Activated CD4-positive, alpha-beta T cell treated with anti-CD3 and anti-CD28 coated beads, Interleukin-2, amount 10 ng/mL, durations not matched to agents 24 days and 14 days (primary cell): ENCODE measurements at regions of chr6 and their contacts with region 1.

Region 1: GRCh38 chr6:111973118-111973761 is 80.7 kb upstream of the CCN6 start:
- DNase-seq: peak; percentile 86
- H3K4me3 Mint-ChIP-seq: peak overlapping the region; percentile 73
- H3K27ac Mint-ChIP-seq: peak overlapping the region; percentile 86
- H3K4me1 Mint-ChIP-seq: peaks cover 51% of the 10 kb centered on the region
- H3K27me3 Mint-ChIP-seq: peaks cover 7% of the 10 kb centered on the region

Region 2: DNA sequence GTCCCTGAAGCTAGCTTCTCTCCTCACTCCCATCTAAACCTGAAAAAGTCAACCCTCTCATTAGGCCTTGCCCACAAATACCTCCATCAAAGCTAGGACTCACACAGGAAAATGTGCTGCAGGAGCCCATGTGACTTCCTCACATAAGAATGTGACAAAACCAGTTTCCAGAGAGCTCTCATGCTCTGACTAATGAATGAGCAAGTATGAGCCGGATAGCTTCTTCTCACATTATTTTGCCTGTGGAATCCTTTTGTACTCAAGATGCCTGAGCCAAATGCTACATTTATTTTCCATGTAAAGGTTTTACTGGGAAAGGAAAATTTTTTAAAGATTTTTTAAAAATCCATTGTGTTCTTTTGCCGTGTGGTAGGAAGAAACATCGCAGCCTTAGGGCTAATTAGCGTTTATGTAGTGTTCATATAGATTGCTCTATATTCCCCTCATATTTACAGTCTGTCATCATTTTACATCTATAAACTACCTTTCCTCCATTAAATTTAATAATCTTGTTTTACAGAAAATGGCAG is 12.0 kb after region 1 on chr6:
- intact Hi-C with region 1: loop called (anchors 1 kb)
- DNase-seq: peak; percentile 73
- H3K4me3 Mint-ChIP-seq: peak overlapping the region; percentile 11
- H3K27ac Mint-ChIP-seq: peak overlapping the region; percentile 84
- H3K4me1 Mint-ChIP-seq: peaks cover 51% of the 10 kb centered on the region
- H3K27me3 Mint-ChIP-seq: no peaks in the 10 kb centered on the region